ENCODE measurements at regions of chr10 and their contacts with region 1.

Region 1: DNA sequence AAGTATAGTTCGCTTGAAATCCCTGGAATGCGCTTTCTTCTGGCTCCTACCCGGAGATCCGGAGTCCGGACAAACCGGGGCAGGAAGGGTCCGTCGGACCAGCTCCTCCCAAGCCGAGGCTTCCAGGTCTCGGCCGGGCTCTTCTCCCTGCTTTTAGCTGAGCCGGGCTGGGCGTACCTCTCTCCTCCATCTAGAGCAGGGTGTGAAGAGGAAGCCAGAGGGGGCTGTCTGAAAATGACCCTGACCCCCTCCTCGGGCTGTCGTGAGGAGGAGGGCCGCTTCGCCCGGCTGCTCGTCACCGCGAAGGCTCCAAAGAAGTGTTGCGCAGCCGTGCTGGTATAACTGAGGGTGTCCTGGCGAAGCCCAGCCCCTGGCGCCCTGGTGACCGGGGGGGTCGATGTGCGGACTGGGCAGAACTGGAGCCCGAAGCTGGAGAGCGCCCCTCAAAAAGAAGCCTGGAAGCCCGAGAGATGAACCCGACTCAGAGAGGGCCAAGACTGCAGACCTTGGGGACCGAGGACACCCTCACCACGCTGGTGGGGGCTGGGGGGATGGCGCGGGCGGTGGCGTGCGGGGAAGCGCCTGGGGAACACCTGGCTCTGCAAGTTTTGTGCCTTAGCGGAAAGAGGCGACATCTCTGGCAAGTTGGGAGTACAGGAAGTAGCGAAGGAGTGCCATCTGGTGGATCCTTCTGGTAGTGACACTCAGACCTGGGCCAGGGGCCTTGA is 5.7 kb downstream of the KAZALD1 start:
- DNase-seq: peak; percentile 87
- H3K4me3 Mint-ChIP-seq: peak overlapping the region; percentile 85
- H3K27ac Mint-ChIP-seq: no peak overlapping the region
- H3K4me1 Mint-ChIP-seq: peaks cover 12% of the 10 kb centered on the region
- H3K27me3 Mint-ChIP-seq: no peaks in the 10 kb centered on the region
- CTCF ChIP-seq: peak; percentile 81

Region 2: DNA sequence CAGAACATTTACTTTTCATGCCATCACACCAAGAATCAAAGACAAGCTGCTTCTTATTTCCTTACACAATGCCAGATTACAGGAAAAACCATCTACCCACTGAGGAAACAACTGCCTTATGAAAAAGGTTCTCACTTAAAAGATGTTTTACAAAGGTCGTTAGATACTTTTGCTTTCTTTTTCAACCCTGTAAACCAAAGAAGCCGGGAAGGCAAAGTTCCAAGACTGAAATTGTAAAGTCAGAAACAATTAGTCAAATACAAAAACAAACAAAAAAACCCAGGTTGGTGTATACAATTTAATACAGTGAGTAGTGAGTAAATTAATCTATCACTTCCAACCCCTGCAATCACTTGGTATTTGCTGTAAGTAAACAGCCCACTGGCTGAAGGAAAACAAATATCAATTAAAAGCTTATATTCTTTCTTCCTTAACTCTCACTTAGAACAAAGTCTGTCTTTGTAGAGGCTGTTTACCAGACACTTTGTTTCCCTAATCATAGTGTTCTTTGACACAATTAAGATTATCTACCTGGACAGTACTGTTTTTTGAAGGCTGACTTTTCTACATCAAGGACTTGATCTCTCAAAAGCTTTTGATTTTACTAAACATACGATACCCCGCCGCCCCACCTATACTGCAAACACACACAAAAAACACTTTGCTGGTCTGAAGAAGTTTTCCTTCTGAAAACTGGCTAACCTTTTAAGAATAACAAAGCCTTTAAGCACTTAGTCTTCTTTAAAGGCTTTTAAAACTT is 899.8 kb before region 1 on chr10:
- CTCF ChIA-PET with region 1: no interaction called
- POLR2A ChIA-PET with region 1: no interaction called
- intact Hi-C with region 1: no loop called
- DNase-seq: no peak
- H3K4me3 Mint-ChIP-seq: no peak overlapping the region
- H3K27ac Mint-ChIP-seq: no peak overlapping the region
- H3K4me1 Mint-ChIP-seq: peaks cover 9% of the 10 kb centered on the region
- H3K27me3 Mint-ChIP-seq: no peaks in the 10 kb centered on the region
- CTCF ChIP-seq: no peak

Region 3: GRCh38 chr10:101012525-101013364 is 54.8 kb before region 1 on chr10:
- CTCF ChIA-PET with region 1: interaction called, 12 read pairs
- POLR2A ChIA-PET with region 1: no interaction called
- intact Hi-C with region 1: no loop called
- DNase-seq: peak; percentile 95
- H3K4me3 Mint-ChIP-seq: no peak overlapping the region
- H3K27ac Mint-ChIP-seq: peak overlapping the region; percentile 29
- H3K4me1 Mint-ChIP-seq: peaks cover 26% of the 10 kb centered on the region
- H3K27me3 Mint-ChIP-seq: no peaks in the 10 kb centered on the region
- CTCF ChIP-seq: peak; percentile 67

Region 4: DNA sequence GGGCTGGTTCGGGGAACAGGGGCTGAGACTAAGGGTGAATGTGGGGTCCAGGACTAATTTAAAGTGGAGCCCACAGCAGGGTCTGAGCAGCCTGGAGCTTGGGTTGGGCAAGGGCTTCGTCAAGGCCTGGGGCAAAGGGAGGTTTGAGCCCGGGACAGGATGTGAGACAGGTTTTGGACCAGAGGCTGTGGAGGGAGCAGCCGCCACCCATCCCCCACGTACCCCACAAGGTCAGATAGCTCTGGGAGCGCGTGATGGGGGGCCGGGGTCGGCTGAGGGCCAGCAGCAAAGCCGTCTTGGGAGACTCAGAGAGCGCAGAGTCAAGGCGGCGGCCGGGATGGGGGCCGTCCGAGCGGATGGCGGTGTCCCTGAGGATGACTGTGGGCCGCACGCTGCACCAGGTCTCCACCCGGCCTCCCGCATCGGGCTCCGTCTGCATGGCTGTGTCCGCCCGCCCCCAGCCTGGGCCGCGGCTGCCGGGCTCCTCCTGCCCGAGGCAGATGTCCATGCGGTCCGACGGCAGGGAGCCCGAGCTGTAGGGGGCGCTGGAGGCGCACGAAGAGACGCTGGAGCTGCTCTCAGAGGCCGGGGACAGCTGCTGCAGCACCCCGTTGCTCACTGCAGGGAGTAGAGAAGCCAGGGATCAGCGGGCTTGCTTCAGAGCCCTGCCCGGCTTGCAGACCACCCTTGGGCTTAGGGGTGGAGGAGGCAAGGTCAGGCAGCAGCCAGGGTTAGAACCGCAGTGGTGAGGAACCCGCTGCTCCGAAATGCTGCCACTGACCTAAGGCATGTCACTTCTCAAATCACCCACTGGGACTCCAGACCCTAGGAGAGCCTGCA is 48.7 kb before region 1 on chr10:
- CTCF ChIA-PET with region 1: interaction called, 12 read pairs
- POLR2A ChIA-PET with region 1: no interaction called
- intact Hi-C with region 1: loop called (anchors 1 kb)
- DNase-seq: peak; percentile 71
- H3K4me3 Mint-ChIP-seq: no peak overlapping the region
- H3K27ac Mint-ChIP-seq: peak overlapping the region; percentile 85
- H3K4me1 Mint-ChIP-seq: peaks cover 20% of the 10 kb centered on the region
- H3K27me3 Mint-ChIP-seq: no peaks in the 10 kb centered on the region
- CTCF ChIP-seq: peak; percentile 76

Region 5: GRCh38 chr10:101031128-101031795 is 36.3 kb before region 1 on chr10 and contains the starts of genes PDZD7 and SFXN3:
- CTCF ChIA-PET with region 1: interaction called, 234 read pairs
- POLR2A ChIA-PET with region 1: interaction called, 37 read pairs
- intact Hi-C with region 1: loop called (anchors 5 kb)
- DNase-seq: peak; percentile 89
- H3K4me3 Mint-ChIP-seq: peak within 1 kb of the TSS; percentile 93
- H3K27ac Mint-ChIP-seq: peak within 1 kb of the TSS; percentile 94
- H3K4me1 Mint-ChIP-seq: peaks cover 31% of the 10 kb centered on the region
- H3K27me3 Mint-ChIP-seq: no peaks in the 10 kb centered on the region
- CTCF ChIP-seq: no peak
- total RNA-seq, gene PDZD7: 0.27 and 0.58 TPM in 2 replicates
- total RNA-seq, gene SFXN3: 39.4 and 55.2 TPM in 2 replicates

Region 6: GRCh38 chr10:101042667-101043355 is 24.7 kb before region 1 on chr10:
- CTCF ChIA-PET with region 1: interaction called, 234 read pairs
- POLR2A ChIA-PET with region 1: interaction called, 55 read pairs
- intact Hi-C with region 1: loop called (anchors 1 kb)
- DNase-seq: peak; percentile 98
- H3K4me3 Mint-ChIP-seq: peak overlapping the region; percentile 98
- H3K27ac Mint-ChIP-seq: peak overlapping the region; percentile 100
- H3K4me1 Mint-ChIP-seq: peaks cover 29% of the 10 kb centered on the region
- H3K27me3 Mint-ChIP-seq: no peaks in the 10 kb centered on the region
- CTCF ChIP-seq: no peak

Region 7: DNA sequence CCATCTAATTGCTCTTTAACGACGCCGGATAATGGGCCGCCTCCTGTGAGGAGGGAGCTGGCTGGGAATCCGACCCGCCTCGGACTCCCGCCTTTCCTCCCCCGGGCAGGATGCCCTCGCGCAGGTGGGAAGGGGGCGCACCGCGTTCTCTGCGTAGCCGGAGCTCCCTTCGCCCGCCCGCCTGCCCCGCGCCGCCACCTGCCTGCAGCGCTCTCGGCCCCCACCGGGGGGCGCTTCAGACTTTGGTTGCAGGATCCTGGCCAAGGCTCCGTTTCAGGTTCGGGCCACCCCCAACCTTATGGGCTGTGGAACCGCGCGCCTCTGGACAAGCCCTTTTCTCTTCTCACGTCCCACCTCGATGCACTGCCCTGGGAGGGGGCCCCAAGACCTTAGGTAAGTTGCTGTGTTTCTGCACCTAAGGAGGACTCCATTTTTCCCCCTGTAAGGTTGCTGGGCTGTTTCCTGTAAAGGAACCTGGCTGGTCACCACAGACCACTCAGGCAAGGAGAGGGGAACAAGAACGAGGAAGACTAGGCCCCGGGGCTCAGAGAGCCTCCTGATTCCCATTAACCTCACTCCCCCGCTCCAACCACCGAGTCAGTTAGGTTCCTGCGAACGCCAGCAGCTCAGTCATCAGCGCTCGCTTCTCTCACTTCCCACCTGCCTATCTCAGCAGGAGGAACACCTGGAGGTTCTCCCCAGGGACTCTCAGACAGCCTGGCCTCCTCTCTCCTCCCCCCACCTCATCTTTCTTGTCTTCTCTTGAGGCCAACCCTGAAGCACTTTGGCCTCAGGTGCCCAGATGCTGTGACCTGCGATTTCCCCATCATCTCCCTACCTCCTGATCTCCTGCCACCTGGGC is 17.1 kb before region 1 on chr10:
- CTCF ChIA-PET with region 1: interaction called, 234 read pairs
- POLR2A ChIA-PET with region 1: interaction called, 25 read pairs
- intact Hi-C with region 1: loop called (anchors 1 kb)
- DNase-seq: peak; percentile 64
- H3K4me3 Mint-ChIP-seq: peak overlapping the region; percentile 47
- H3K27ac Mint-ChIP-seq: no peak overlapping the region
- H3K4me1 Mint-ChIP-seq: peaks cover 8% of the 10 kb centered on the region
- H3K27me3 Mint-ChIP-seq: no peaks in the 10 kb centered on the region
- CTCF ChIP-seq: peak; percentile 85

Region 8: GRCh38 chr10:101080933-101081931 is 13.7 kb after region 1 on chr10:
- CTCF ChIA-PET with region 1: interaction called, 16 read pairs
- POLR2A ChIA-PET with region 1: interaction called, 3 read pairs
- intact Hi-C with region 1: no loop called
- DNase-seq: peak; percentile 45
- H3K4me3 Mint-ChIP-seq: no peak overlapping the region
- H3K27ac Mint-ChIP-seq: no peak overlapping the region
- H3K4me1 Mint-ChIP-seq: peaks cover 5% of the 10 kb centered on the region
- H3K27me3 Mint-ChIP-seq: peaks cover 45% of the 10 kb centered on the region
- CTCF ChIP-seq: no peak

Region 9: GRCh38 chr10:101110856-101111546 is 43.5 kb after region 1 on chr10:
- CTCF ChIA-PET with region 1: no interaction called
- POLR2A ChIA-PET with region 1: no interaction called
- intact Hi-C with region 1: no loop called
- DNase-seq: no peak
- H3K4me3 Mint-ChIP-seq: no peak overlapping the region
- H3K27ac Mint-ChIP-seq: no peak overlapping the region
- H3K4me1 Mint-ChIP-seq: no peaks in the 10 kb centered on the region
- H3K27me3 Mint-ChIP-seq: peaks cover 24% of the 10 kb centered on the region
- CTCF ChIP-seq: no peak

Region 10: DNA sequence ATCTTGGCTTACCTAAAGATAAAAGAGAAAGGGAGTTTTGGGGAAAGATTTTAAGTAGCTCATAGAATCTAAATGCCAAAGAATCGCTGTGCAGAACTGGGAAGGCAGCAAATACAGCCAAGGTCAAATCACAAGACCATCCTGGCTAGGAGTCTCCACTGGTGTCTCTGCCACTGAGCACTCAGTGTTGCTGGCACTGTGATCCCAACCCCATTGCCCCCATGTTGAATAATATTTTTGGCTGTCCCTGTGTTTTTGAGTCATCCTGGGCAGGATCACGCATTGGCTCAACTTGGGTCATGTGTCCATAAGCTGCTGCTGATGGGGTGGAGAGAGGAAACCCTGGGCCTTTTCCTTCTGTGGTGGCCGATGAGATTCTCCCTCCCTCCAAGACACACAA is 84.8 kb after region 1 on chr10:
- CTCF ChIA-PET with region 1: no interaction called
- POLR2A ChIA-PET with region 1: no interaction called
- intact Hi-C with region 1: no loop called
- DNase-seq: no peak
- H3K4me3 Mint-ChIP-seq: no peak overlapping the region
- H3K27ac Mint-ChIP-seq: no peak overlapping the region
- H3K4me1 Mint-ChIP-seq: no peaks in the 10 kb centered on the region
- H3K27me3 Mint-ChIP-seq: peaks cover 62% of the 10 kb centered on the region
- CTCF ChIP-seq: no peak